ENCODE measurements at regions of chr12 and their contacts with region 1.

Region 1: DNA sequence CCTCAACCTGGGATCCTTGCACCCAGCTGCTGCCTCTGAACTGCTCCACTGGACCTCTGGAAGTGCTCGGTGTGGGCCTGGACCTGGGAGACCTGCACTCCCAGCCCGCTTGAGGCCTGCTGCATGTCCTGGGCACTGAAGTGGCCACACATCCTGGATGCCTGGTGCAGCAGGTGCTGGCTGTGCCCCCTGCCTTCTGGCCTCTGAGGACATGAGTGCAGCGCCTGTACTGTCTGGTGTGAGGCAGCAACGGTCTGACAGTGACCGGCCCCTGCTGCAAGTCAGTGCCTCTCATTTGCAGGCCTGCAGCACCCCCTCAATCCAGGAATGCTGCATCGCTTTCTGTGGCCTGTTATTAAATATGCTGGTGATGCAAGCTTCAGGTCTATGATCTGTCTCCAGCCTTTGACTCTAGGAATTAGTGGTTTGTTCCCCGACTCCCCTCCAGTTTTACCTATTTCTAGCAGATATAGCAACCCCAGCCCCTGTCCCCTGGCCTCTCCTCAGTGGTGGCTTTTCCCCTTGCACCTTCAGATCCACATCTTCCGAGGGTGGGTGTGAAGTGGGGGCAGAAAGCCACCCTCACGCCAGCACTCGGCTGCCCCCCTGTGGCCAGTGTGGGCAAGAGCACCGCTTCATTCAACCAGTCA is 3.6 kb downstream of the SMIM41 start:
- DNase-seq: peak; percentile 76 to 87 (median 86)
- ATAC-seq: peak; percentile 89
- H3K4me3 ChIP-seq: no peak overlapping the region
- H3K27ac ChIP-seq: no peak overlapping the region
- H3K4me1 ChIP-seq: peaks cover 0 to 10% of the 10 kb centered on the region in 2 experiments; a peak in 1 of 5 replicates
- H3K27me3 ChIP-seq: peaks cover 28 to 37% of the 10 kb centered on the region in 2 experiments; a peak in 4 of 5 replicates
- CTCF ChIP-seq: peak; percentile 94 to 98 (median 95)
- EP300 ChIP-seq: no peak
- POLR2A ChIP-seq: no peak
- RAD21 ChIP-seq: peak; percentile 92 to 96

Region 2: DNA sequence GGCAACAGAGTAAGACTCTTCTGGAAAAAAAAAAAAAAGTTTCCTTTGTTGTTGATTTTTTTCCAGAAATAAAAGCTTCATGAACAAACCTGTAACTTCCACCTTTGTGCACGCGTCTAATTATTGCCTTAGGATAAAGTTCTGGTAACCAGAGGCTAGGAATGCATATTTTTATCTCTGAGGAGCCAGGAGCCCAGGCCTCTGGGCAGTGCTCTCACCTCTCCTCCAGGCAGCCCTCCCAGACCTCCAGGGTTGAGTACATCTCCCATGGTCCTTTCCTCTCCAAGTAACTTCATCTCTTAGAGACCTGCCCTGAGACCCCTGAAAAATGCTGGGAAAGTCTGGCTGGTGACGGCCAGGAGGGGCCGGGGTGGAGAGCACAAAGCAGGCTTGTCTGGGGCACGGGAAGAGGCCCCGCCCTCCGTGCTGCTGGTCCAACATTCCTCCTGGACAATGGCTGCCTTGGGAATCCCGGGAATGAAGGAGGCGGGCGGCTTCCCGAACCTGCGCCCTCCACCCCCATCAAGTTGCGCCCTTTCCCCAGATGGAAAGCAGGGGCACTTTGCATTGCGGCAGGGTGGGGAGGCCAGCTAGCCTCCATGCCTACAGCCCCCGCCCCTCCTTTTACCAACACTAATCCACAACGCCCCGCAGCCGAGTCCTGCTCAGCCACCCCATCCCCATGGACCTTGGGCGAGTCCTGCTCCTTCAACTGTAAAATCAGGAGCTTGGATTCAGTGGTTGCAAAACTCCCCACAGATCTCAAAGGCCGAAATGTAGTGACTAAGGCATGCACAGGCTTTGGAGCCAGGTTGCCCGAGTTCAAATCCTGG is 227.3 kb before region 1 on chr12:
- CTCF ChIA-PET with region 1: no interaction called
- POLR2A ChIA-PET with region 1: no interaction called
- in situ Hi-C with region 1: no loop called
- intact Hi-C with region 1: no loop called
- DNase-seq: no peak
- ATAC-seq: no peak
- H3K4me3 ChIP-seq: no peak overlapping the region
- H3K27ac ChIP-seq: no peak overlapping the region
- H3K4me1 ChIP-seq: no peaks in the 10 kb centered on the region
- H3K27me3 ChIP-seq: peaks cover 22 to 56% of the 10 kb centered on the region in 2 experiments
- CTCF ChIP-seq: no peak
- EP300 ChIP-seq: no peak
- POLR2A ChIP-seq: no peak
- RAD21 ChIP-seq: no peak

Region 3: GRCh38 chr12:52004042-52004648 is 79.0 kb before region 1 on chr12:
- CTCF ChIA-PET with region 1: interaction called, 15 read pairs
- POLR2A ChIA-PET with region 1: interaction called, 3 read pairs
- in situ Hi-C with region 1: no loop called
- intact Hi-C with region 1: no loop called
- DNase-seq: peak; percentile 62 to 68 (median 65)
- ATAC-seq: peak; percentile 77
- H3K4me3 ChIP-seq: no peak overlapping the region
- H3K27ac ChIP-seq: no peak overlapping the region
- H3K4me1 ChIP-seq: peaks cover under 1 to 23% of the 10 kb centered on the region in 2 experiments; a peak in 3 of 5 replicates
- H3K27me3 ChIP-seq: no peaks in the 10 kb centered on the region
- CTCF ChIP-seq: peak; percentile 75 to 88 (median 81)
- EP300 ChIP-seq: no peak
- POLR2A ChIP-seq: no peak
- RAD21 ChIP-seq: peak; percentile 93 to 94

Region 4: GRCh38 chr12:52029686-52030085 is 53.4 kb before region 1 on chr12:
- CTCF ChIA-PET with region 1: interaction called, 242 read pairs
- POLR2A ChIA-PET with region 1: interaction called, 6 read pairs
- in situ Hi-C with region 1: loop called (anchors 5 kb)
- intact Hi-C with region 1: loop called (anchors 1 kb)
- DNase-seq: peak in 2 of 4 experiments; percentile 55
- ATAC-seq: peak; percentile 18
- H3K4me3 ChIP-seq: no peak overlapping the region
- H3K27ac ChIP-seq: no peak overlapping the region
- H3K4me1 ChIP-seq: peaks cover 14 to 18% of the 10 kb centered on the region in 2 experiments; a peak in 3 of 5 replicates
- H3K27me3 ChIP-seq: peaks cover 0 to 23% of the 10 kb centered on the region in 2 experiments; a peak in 3 of 5 replicates
- CTCF ChIP-seq: no peak
- EP300 ChIP-seq: no peak
- POLR2A ChIP-seq: no peak
- RAD21 ChIP-seq: no peak

Region 5: GRCh38 chr12:52069327-52070184 is 13.6 kb before region 1 on chr12 and contains the start of gene ATG101:
- CTCF ChIA-PET with region 1: interaction called, 5 read pairs
- POLR2A ChIA-PET with region 1: interaction called, 18 read pairs
- in situ Hi-C with region 1: no loop called
- intact Hi-C with region 1: no loop called
- DNase-seq: peak; percentile 89 to 95 (median 93)
- ATAC-seq: peak; percentile 98
- H3K4me3 ChIP-seq: peak within 1 kb of the TSS; percentile 65
- H3K27ac ChIP-seq: peak within 1 kb of the TSS; percentile 87
- H3K4me1 ChIP-seq: peaks cover 9 to 16% of the 10 kb centered on the region in 2 experiments
- H3K27me3 ChIP-seq: peaks cover 0 to 4% of the 10 kb centered on the region in 2 experiments; a peak in 2 of 5 replicates
- CTCF ChIP-seq: peak; percentile 92 to 97 (median 96)
- EP300 ChIP-seq: peak; percentile 68
- POLR2A ChIP-seq: peak; percentile 90
- RAD21 ChIP-seq: peak in 1 of 2 experiments; percentile 23; a peak in 1 of 4 replicates
- polyA plus RNA-seq, gene ATG101: 2.9 to 3.9 TPM

Region 6: GRCh38 chr12:52121824-52122539 is 38.9 kb after region 1 on chr12:
- CTCF ChIA-PET with region 1: interaction called, 3 read pairs
- POLR2A ChIA-PET with region 1: no interaction called
- in situ Hi-C with region 1: no loop called
- intact Hi-C with region 1: loop called (anchors 5 kb)
- DNase-seq: peak; percentile 68 to 73 (median 72)
- ATAC-seq: peak; percentile 72
- H3K4me3 ChIP-seq: no peak overlapping the region
- H3K27ac ChIP-seq: no peak overlapping the region
- H3K4me1 ChIP-seq: peaks cover 8 to 14% of the 10 kb centered on the region in 2 experiments; a peak in 3 of 5 replicates
- H3K27me3 ChIP-seq: peaks cover 20 to 62% of the 10 kb centered on the region in 2 experiments
- CTCF ChIP-seq: peak; percentile 70 to 86 (median 79)
- EP300 ChIP-seq: no peak
- POLR2A ChIP-seq: no peak
- RAD21 ChIP-seq: peak; percentile 28 to 69; a peak in 3 of 4 replicates